ENCODE measurements at regions of chr1 and their contacts with region 1.

Region 1: DNA sequence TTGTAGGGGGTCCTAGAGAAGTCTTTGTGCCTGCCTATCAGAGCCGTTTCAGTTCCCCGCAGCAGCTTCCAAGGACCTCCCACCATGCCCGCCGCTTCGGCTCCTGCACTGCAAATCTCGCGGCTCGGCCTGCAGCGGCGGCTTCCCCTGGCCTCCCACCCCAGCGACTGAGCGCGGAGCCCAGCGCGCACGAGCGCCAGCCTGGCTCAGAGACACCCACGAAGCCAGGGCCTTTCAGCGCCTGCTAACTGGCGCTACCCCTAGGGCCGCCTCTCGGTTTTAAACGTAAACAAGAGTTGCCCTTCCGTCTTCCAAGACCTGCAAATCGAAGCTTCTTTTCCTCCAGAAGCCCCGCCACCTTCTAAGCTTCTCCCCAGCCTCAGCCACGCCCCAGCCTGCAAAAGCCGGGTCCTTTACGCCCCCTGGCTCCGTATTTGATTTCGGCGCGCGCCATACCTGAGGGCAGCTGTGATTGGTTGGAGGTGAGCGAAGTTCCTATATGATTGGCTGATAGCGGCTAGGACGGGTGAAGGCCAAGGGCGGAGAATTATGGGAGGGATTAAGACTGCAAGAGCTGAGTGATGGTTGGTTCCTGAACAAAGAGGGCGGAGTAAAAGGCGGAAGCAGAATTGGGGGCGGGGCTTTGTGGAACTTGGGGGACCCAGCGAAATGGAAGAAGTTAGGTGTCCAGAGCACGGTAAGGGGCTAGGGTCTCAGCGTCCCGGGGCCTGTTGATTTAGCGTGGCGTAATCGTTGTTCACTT is at the start of gene TTF2:
- DNase-seq: peak; percentile 99
- H3K4me3 ChIP-seq: peak within 1 kb of the TSS; percentile 78 to 99 (median 87)
- H3K27ac ChIP-seq: peak within 1 kb of the TSS; percentile 85
- H3K4me1 ChIP-seq: peaks cover 26% of the 10 kb centered on the region
- H3K27me3 ChIP-seq: no peaks in the 10 kb centered on the region
- CTCF ChIP-seq: peak in 1 of 2 donors; percentile 26
- total RNA-seq, gene TTF2: 15.5 to 41.3 TPM

Region 2: GRCh38 chr1:116724765-116725375 is 335.0 kb before region 1 on chr1:
- CTCF ChIA-PET with region 1: no interaction called
- dilution Hi-C with region 1: loop called (anchors 25 kb)
- in situ Hi-C with region 1: no loop called
- intact Hi-C with region 1: loop called (anchors 1 kb)
- DNase-seq: peak; percentile 52
- H3K4me3 ChIP-seq: no peak overlapping the region
- H3K27ac ChIP-seq: no peak overlapping the region
- H3K4me1 ChIP-seq: peaks cover 39% of the 10 kb centered on the region
- H3K27me3 ChIP-seq: no peaks in the 10 kb centered on the region
- CTCF ChIP-seq: peak; percentile 68 to 89

Region 3: DNA sequence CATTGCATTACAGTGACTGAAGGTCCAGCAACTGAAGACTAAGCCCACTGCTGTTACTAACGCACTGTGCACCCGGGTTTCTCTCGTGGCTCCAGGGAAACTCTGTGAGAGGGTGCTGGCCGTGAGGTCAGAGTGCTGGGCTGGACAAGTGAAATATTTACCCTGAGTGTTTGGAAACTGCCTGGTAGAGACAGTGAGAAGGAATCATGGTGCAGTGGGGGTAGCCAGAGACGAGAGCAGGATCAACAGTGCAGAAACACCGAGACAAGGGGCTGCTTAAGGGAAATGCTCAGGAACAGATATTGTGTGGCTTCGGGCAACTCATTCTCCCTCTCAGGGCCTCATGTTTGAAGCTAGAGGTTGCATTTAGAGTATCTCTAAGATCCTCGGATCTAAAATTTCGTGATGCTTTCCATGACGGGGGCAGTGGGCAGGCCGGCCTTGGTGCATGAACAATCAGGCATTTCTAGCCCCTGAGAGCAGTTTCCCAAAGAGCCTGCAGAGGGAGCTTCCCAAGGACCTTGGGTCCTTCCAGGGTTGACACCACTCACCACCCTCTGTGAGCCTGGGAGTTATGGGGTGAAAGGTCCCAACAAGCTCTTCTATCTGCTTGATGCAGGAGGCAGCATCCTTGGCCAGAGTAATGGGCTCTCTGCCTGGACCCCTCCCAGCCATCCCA is 295.9 kb before region 1 on chr1:
- CTCF ChIA-PET with region 1: no interaction called
- dilution Hi-C with region 1: no loop called
- in situ Hi-C with region 1: no loop called
- intact Hi-C with region 1: loop called (anchors 1 kb)
- DNase-seq: no peak
- H3K4me3 ChIP-seq: no peak overlapping the region
- H3K27ac ChIP-seq: no peak overlapping the region
- H3K4me1 ChIP-seq: no peaks in the 10 kb centered on the region
- H3K27me3 ChIP-seq: no peaks in the 10 kb centered on the region
- CTCF ChIP-seq: peak; percentile 46 to 59

Region 4: DNA sequence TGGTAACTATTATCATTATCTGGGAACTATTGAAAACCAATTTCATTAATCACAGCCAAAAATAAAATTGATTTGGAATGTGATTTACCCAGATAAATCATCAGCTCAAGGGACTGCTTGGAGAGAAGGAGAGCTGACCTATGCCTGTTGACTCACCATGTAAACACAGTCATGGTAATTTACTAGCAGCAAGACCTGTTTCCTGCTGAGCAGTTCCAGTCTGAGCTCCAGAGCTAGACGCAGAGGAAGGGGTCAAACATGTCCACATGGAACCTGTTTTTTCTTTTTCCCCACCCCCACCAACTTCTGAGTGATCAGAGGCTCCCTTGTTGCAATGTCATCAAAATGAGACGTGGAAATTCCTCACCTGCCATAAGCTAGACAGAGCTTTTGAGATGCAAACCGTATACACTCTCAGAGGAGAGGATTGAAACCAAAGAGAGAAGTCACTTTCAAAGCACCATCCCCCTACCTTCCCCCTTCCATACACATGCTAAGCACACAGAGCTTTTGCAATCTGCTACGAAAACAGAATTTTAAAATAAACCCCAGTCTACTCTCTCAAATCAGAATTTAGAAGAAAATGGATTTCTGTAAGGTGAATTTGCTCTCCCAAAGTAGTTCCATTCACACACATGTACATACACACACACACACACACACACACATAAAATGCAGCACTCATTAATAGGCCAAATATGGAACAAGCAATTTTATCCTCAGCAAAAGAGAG is 206.0 kb before region 1 on chr1:
- CTCF ChIA-PET with region 1: no interaction called
- dilution Hi-C with region 1: no loop called
- in situ Hi-C with region 1: loop called in 1 of 2 experiments (anchors 10 kb)
- intact Hi-C with region 1: loop called (anchors 1 kb)
- DNase-seq: peak; percentile 83
- H3K4me3 ChIP-seq: no peak overlapping the region
- H3K27ac ChIP-seq: no peak overlapping the region
- H3K4me1 ChIP-seq: peaks cover 31% of the 10 kb centered on the region
- H3K27me3 ChIP-seq: no peaks in the 10 kb centered on the region
- CTCF ChIP-seq: no peak

Region 5: DNA sequence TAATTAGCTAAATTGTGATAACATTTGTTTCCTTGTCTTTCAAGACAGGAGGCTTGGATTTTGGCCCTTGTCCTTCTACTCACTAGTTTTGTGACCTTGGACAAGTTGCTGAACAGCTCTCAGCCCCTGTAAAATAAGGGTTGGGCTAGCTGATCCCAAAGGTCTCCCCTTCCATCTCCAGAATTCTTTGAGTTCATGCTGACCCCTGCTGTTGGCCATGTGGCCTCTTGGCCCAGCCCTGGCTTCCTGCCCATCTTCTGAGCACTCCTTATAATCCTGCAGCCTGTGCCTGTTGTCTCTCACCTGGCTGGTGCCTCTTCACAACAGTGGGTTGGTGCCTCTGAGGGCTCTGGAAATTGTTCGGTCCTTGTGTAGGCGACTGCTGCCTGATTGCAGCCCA is 140.1 kb before region 1 on chr1:
- CTCF ChIA-PET with region 1: no interaction called
- dilution Hi-C with region 1: no loop called
- in situ Hi-C with region 1: no loop called
- intact Hi-C with region 1: loop called (anchors 5 kb)
- DNase-seq: no peak
- H3K4me3 ChIP-seq: no peak overlapping the region
- H3K27ac ChIP-seq: peak overlapping the region; percentile 42
- H3K4me1 ChIP-seq: peaks cover 65% of the 10 kb centered on the region
- H3K27me3 ChIP-seq: no peaks in the 10 kb centered on the region
- CTCF ChIP-seq: no peak

Region 6: GRCh38 chr1:116956378-116956777 is 103.5 kb before region 1 on chr1:
- CTCF ChIA-PET with region 1: no interaction called
- dilution Hi-C with region 1: no loop called
- in situ Hi-C with region 1: no loop called
- intact Hi-C with region 1: no loop called
- DNase-seq: no peak
- H3K4me3 ChIP-seq: no peak overlapping the region
- H3K27ac ChIP-seq: no peak overlapping the region
- H3K4me1 ChIP-seq: no peaks in the 10 kb centered on the region
- H3K27me3 ChIP-seq: no peaks in the 10 kb centered on the region
- CTCF ChIP-seq: no peak

Region 7: DNA sequence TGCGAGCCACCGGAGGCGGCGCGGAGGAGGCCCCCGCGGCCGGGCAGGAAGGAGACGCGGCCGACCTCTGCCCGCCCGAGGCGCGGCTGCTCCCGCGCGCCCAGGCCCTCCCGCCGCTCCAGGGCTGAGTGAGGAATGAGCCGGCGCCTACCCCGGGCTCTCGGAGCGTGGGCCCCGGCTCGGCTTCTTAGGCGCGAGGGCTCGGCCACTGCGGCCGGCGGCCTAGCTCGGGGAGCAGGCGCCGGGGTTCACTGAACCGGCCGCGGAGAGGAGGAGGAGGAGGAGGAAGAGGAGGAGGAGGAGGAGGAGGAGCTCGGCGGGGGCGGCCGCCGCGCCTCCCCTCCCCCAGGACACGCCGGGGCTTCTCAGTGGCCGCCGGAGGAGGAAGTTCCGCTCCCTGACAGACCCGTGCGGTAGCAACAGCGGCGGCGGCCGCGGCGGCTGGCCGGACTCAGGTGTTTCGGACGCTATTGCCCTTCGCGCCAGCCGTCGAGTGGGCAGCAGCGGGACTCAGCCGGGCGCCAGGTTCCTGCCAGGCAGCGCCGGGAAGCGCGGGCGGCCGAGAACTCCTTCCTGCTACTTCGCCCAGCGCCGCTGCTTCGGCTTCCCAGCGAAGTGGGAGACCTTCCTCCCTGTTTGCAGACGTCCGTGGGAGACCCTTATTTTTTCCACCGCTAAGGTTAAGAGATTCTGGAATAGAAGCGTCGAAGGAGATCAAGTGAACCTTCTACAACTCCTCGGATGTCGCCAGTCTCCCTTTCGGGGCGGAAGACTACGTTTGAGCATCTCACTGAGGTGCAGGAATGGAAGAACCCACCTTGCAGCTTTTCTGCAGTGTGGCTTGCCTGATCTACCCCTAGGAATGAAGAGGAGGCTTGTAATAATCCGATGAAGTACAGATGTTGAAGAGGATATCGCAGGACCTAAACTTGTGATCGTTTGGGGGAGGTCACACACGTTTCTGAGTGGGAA is 307.5 kb after region 1 on chr1 and contains the start of gene MAN1A2:
- CTCF ChIA-PET with region 1: no interaction called
- dilution Hi-C with region 1: no loop called
- in situ Hi-C with region 1: no loop called
- intact Hi-C with region 1: loop called (anchors 5 kb)
- DNase-seq: peak; percentile 82
- H3K4me3 ChIP-seq: peak within 1 kb of the TSS; percentile 59 to 94 (median 91)
- H3K27ac ChIP-seq: peak within 1 kb of the TSS; percentile 72
- H3K4me1 ChIP-seq: peaks cover 20% of the 10 kb centered on the region
- H3K27me3 ChIP-seq: no peaks in the 10 kb centered on the region
- CTCF ChIP-seq: peak in 1 of 2 donors; percentile 0
- total RNA-seq, gene MAN1A2: 23.8 to 41.5 TPM

Measured in mammary epithelial cell (primary cell).